A549 (cell line): ENCODE measurements at regions of chr14 and their contacts with region 1.

Region 1: GRCh38 chr14:73613046-73613383 is 698 bp downstream of the ACOT6 start:
- DNase-seq: peak in 1 of 2 experiments; percentile 52
- ATAC-seq: peak; percentile 66 to 73
- H3K4me3 ChIP-seq: peak overlapping the region; percentile 63
- H3K27ac ChIP-seq: peak overlapping the region; percentile 74 to 87
- H3K4me1 ChIP-seq: peaks cover 3% of the 10 kb centered on the region; the same call in 1 of the 3 replicates
- CTCF ChIP-seq: no peak
- EP300 ChIP-seq: no peak
- POLR2A ChIP-seq: no peak
- RAD21 ChIP-seq: no peak

Region 2: GRCh38 chr14:73568381-73568781 is 44.6 kb before region 1 on chr14:
- CTCF ChIA-PET with region 1: interaction called, 4 read pairs
- POLR2A ChIA-PET with region 1: interaction called, 21 read pairs
- DNase-seq: no peak
- ATAC-seq: no peak
- H3K4me3 ChIP-seq: peak overlapping the region; percentile 55
- H3K27ac ChIP-seq: peak overlapping the region; percentile 94 to 98
- H3K4me1 ChIP-seq: peaks cover 21% of the 10 kb centered on the region
- CTCF ChIP-seq: no peak
- EP300 ChIP-seq: no peak
- POLR2A ChIP-seq: no peak
- RAD21 ChIP-seq: no peak

Region 3: GRCh38 chr14:73591690-73592448 is 21.1 kb before region 1 on chr14 and contains the start of gene ACOT4:
- CTCF ChIA-PET with region 1: interaction called, 6 read pairs
- POLR2A ChIA-PET with region 1: interaction called, 11 read pairs
- DNase-seq: peak; percentile 49 to 62
- ATAC-seq: peak; percentile 90 to 91
- H3K4me3 ChIP-seq: peak within 1 kb of the TSS; percentile 55
- H3K27ac ChIP-seq: peak within 1 kb of the TSS; percentile 73 to 85
- H3K4me1 ChIP-seq: no peaks in the 10 kb centered on the region
- CTCF ChIP-seq: 0 out of 3 replicates have a peak, but pooled peaks have one; percentile 11
- EP300 ChIP-seq: no peak
- POLR2A ChIP-seq: peak; percentile 42
- RAD21 ChIP-seq: no peak
- polyA plus RNA-seq, gene ACOT4: 2.7 and 3.4 TPM in 2 replicates

Region 4: GRCh38 chr14:73977600-73978295 is 364.7 kb after region 1 on chr14:
- CTCF ChIA-PET with region 1: no interaction called
- POLR2A ChIA-PET with region 1: no interaction called
- DNase-seq: no peak
- ATAC-seq: no peak
- H3K4me3 ChIP-seq: no peak overlapping the region
- H3K27ac ChIP-seq: no peak overlapping the region
- H3K4me1 ChIP-seq: peaks cover 9% of the 10 kb centered on the region; the same call in 1 of the 3 replicates
- CTCF ChIP-seq: no peak
- EP300 ChIP-seq: no peak
- POLR2A ChIP-seq: no peak
- RAD21 ChIP-seq: no peak